ENCODE measurements at regions of chr2 and their contacts with region 1.

Region 1: GRCh38 chr2:54838585-54839035 is 115.1 kb downstream of the EML6 start:
- DNase-seq: peak; percentile 62 to 70
- H3K4me3 ChIP-seq: no peak overlapping the region
- H3K4me3 Mint-ChIP-seq: no peak overlapping the region
- H3K27ac Mint-ChIP-seq: no peak overlapping the region
- H3K4me1 ChIP-seq: no peaks in the 10 kb centered on the region
- H3K4me1 Mint-ChIP-seq: peaks cover 6% of the 10 kb centered on the region
- H3K27me3 ChIP-seq: no peaks in the 10 kb centered on the region
- H3K27me3 Mint-ChIP-seq: no peaks in the 10 kb centered on the region
- CTCF ChIP-seq: peak; percentile 91 to 94

Region 2: GRCh38 chr2:54665436-54665856 is 173.2 kb before region 1 on chr2:
- CTCF ChIA-PET with region 1: interaction called, 18 read pairs
- POLR2A ChIA-PET with region 1: no interaction called
- intact Hi-C with region 1: loop called (anchors 5 kb)
- DNase-seq: peak; percentile 63 to 70
- H3K4me3 ChIP-seq: no peak overlapping the region
- H3K4me3 Mint-ChIP-seq: peak overlapping the region; percentile 8
- H3K27ac Mint-ChIP-seq: peak overlapping the region; percentile 83
- H3K4me1 ChIP-seq: peaks cover 33% of the 10 kb centered on the region
- H3K4me1 Mint-ChIP-seq: peaks cover 41% of the 10 kb centered on the region
- H3K27me3 ChIP-seq: no peaks in the 10 kb centered on the region
- H3K27me3 Mint-ChIP-seq: no peaks in the 10 kb centered on the region
- CTCF ChIP-seq: peak; percentile 55 to 68

Region 3: DNA sequence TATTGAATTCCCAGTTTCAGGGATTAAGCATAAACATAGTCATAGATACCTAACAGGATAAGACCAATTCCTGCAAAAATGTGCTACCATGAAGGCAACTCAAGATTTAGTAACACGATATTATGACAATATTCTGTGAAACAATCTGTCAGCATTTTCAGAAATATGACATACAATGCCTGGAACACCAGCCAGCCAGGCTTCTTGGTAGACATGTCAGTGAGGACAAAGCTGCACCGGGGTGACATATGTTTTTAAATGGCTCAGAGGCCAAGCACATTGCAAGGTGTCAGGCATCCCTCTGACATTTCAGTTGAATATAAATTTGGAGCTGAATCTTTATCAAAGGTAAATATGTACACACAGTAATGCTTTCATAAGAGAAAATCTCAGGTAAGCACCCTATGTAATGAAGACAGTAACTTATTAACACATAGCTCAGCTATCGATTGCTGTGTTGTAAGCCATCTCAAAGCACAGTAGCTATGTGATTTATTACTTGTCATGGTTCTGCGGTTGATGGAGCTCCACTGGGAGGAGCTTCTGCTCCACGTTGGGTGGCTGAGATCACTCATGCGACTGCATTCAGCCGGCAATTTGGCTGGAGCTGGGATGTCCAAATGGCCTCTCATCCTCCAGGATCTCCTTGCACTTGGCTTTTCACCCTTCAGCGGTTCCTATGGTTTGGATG is 147.0 kb before region 1 on chr2:
- CTCF ChIA-PET with region 1: interaction called, 16 read pairs
- POLR2A ChIA-PET with region 1: no interaction called
- intact Hi-C with region 1: loop called (anchors 5 kb)
- DNase-seq: peak; percentile 74 to 81
- H3K4me3 ChIP-seq: no peak overlapping the region
- H3K4me3 Mint-ChIP-seq: no peak overlapping the region
- H3K27ac Mint-ChIP-seq: no peak overlapping the region
- H3K4me1 ChIP-seq: peaks cover 16% of the 10 kb centered on the region
- H3K4me1 Mint-ChIP-seq: peaks cover 9% of the 10 kb centered on the region
- H3K27me3 ChIP-seq: no peaks in the 10 kb centered on the region
- H3K27me3 Mint-ChIP-seq: no peaks in the 10 kb centered on the region
- CTCF ChIP-seq: peak in 1 of 2 experiments; percentile 7

Region 4: DNA sequence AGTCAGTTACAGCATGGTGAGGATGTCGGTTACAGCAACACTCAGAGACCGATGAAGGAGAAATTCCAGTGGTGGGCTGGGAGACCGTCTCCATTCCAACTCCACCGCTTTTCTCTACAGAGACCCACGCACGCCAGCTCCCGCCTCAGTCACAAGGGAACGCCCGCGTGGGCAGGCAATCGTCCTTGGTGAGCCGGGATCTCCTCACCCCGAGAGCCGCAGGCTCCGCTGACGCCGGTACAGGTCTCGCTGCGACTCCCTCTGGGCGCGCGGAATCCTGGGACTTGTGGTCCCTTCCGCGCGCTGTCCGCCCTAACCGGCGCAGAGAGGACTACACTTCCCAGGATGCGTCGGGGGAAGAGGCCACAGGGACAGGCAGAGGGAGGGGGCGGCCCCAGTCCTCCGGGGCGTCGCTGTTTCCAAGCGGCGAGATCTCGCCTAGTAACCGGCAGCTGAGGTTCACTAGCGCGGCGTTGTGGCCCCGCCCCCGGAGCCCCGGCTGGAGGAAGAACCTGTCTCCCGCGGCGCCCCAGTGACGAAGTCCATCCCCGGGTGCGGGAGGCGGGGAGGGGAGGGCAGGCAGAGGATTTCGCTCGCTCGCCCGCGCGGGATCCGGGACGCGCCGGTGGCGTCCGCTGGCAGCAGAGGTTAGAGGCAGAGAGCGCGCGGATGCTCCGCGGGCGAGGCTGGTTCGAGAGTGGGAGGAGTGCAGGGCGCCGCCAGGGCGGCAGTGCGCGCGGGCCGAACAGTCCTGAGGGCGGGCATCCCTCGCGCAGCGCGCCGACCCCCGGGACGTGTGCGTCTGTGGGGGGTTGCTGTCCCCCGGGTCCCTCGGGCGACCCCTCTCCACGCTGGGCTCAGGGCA is 115.2 kb before region 1 on chr2 and contains the start of gene EML6:
- CTCF ChIA-PET with region 1: no interaction called
- POLR2A ChIA-PET with region 1: no interaction called
- intact Hi-C with region 1: loop called (anchors 5 kb)
- DNase-seq: peak; percentile 99
- H3K4me3 ChIP-seq: peak within 1 kb of the TSS; percentile 76
- H3K4me3 Mint-ChIP-seq: peak within 1 kb of the TSS; percentile 92
- H3K27ac Mint-ChIP-seq: peak within 1 kb of the TSS; percentile 70
- H3K4me1 ChIP-seq: no peaks in the 10 kb centered on the region
- H3K4me1 Mint-ChIP-seq: no peaks in the 10 kb centered on the region
- H3K27me3 ChIP-seq: no peaks in the 10 kb centered on the region
- H3K27me3 Mint-ChIP-seq: peaks cover 6% of the 10 kb centered on the region
- CTCF ChIP-seq: peak in 1 of 2 experiments; percentile 13
- total RNA-seq, gene EML6: 5.2 and 9.7 TPM in 2 replicates

Region 5: DNA sequence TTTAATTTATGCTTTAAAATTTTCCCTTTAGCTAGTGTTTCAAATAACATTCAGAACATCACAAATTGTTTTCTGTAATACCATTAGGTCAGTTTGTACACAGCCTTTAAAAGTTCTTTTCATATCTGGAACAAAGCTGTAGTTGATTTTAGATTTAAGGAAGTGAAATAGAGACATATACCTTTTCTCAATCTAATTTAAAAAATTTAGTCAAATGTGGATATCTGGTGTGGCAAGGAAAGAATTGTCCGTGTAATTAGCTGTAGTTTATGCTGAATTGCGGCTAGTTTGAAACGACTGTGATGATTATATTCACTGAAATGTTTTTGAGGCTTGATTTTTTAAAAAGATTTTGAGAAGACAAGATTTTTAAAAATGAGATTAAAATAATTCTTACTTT is 55.3 kb before region 1 on chr2:
- CTCF ChIA-PET with region 1: no interaction called
- POLR2A ChIA-PET with region 1: no interaction called
- intact Hi-C with region 1: no loop called
- DNase-seq: no peak
- H3K4me3 ChIP-seq: no peak overlapping the region
- H3K4me3 Mint-ChIP-seq: no peak overlapping the region
- H3K27ac Mint-ChIP-seq: no peak overlapping the region
- H3K4me1 ChIP-seq: peaks cover 5% of the 10 kb centered on the region; the same call in 1 of the 2 replicates
- H3K4me1 Mint-ChIP-seq: peaks cover 9% of the 10 kb centered on the region
- H3K27me3 ChIP-seq: no peaks in the 10 kb centered on the region
- H3K27me3 Mint-ChIP-seq: no peaks in the 10 kb centered on the region
- CTCF ChIP-seq: no peak

Region 6: DNA sequence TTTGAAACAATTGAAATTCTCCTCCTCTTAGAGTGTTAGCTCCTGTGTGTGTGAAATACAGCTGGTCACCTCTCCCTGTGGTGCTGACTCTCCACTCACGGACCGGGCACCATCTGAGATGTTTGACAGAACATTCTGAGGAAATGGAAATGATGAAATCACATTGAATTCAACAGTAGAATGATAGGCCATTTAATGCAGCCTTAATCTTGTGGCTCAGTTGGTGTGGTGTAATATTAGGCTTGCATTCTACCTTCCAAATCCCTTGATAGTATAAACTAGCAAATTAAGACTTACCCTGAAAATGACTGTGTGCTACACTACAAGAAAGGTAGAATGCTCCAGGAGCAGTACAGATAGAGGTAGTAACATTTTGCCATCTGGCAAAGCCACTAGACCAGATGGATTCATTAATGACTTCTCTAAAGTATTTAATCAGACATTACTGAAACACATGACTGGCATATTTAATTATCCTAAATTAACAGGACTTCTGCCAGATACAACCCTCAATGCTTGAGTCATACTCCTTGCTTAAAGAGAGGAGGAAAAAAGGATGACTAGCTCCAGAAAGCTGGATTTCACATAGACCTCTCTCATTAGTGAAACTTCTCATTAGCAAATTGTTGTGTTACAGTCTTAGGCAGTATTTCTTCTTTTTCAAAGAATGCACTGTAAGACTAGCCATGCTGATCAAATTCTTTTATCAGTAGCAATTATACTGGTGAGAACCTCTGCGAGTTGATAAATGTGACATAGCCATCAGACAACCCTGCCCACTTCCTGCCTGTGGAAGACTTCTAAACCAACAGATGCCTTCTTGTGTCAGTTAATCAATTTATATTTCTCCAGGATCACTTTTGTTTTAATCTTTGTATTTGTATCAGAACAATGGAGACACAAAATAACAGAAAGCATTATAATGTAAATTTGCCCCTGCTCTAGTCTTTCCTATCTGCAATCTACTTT is 34.5 kb before region 1 on chr2:
- CTCF ChIA-PET with region 1: no interaction called
- POLR2A ChIA-PET with region 1: no interaction called
- intact Hi-C with region 1: no loop called
- DNase-seq: no peak
- H3K4me3 ChIP-seq: no peak overlapping the region
- H3K4me3 Mint-ChIP-seq: no peak overlapping the region
- H3K27ac Mint-ChIP-seq: no peak overlapping the region
- H3K4me1 ChIP-seq: no peaks in the 10 kb centered on the region
- H3K4me1 Mint-ChIP-seq: no peaks in the 10 kb centered on the region
- H3K27me3 ChIP-seq: no peaks in the 10 kb centered on the region
- H3K27me3 Mint-ChIP-seq: no peaks in the 10 kb centered on the region
- CTCF ChIP-seq: no peak

Region 7: GRCh38 chr2:55090702-55091101 is 252.1 kb after region 1 on chr2:
- CTCF ChIA-PET with region 1: no interaction called
- POLR2A ChIA-PET with region 1: no interaction called
- intact Hi-C with region 1: no loop called
- DNase-seq: no peak
- H3K4me3 ChIP-seq: no peak overlapping the region
- H3K4me3 Mint-ChIP-seq: no peak overlapping the region
- H3K27ac Mint-ChIP-seq: peak overlapping the region; percentile 13
- H3K4me1 ChIP-seq: no peaks in the 10 kb centered on the region
- H3K4me1 Mint-ChIP-seq: peaks cover 20% of the 10 kb centered on the region
- H3K27me3 ChIP-seq: no peaks in the 10 kb centered on the region
- H3K27me3 Mint-ChIP-seq: no peaks in the 10 kb centered on the region
- CTCF ChIP-seq: no peak

Measured in Caco-2 (cell line).